MCF 10A (cell line): ENCODE measurements at regions of chr15 and their contacts with region 1.

Region 1: GRCh38 chr15:93030430-93031105 is 58.4 kb downstream of the RGMA start:
- DNase-seq: peak; percentile 81
- H3K4me3 Mint-ChIP-seq: peak overlapping the region; percentile 44
- H3K27ac Mint-ChIP-seq: peak overlapping the region; percentile 95
- H3K4me1 Mint-ChIP-seq: peaks cover 38% of the 10 kb centered on the region
- H3K27me3 Mint-ChIP-seq: no peaks in the 10 kb centered on the region
- CTCF ChIP-seq: peak; percentile 86

Region 2: GRCh38 chr15:91694831-91695210 is 1335.7 kb before region 1 on chr15:
- CTCF ChIA-PET with region 1: no interaction called
- POLR2A ChIA-PET with region 1: no interaction called
- intact Hi-C with region 1: no loop called
- DNase-seq: peak; percentile 78
- H3K4me3 Mint-ChIP-seq: peak overlapping the region; percentile 71
- H3K27ac Mint-ChIP-seq: peak overlapping the region; percentile 94
- H3K4me1 Mint-ChIP-seq: peaks cover 10% of the 10 kb centered on the region
- H3K27me3 Mint-ChIP-seq: no peaks in the 10 kb centered on the region
- CTCF ChIP-seq: no peak

Region 3: GRCh38 chr15:92803847-92804609 is 226.5 kb before region 1 on chr15:
- CTCF ChIA-PET with region 1: interaction called, 3 read pairs
- POLR2A ChIA-PET with region 1: interaction called, 4 read pairs
- intact Hi-C with region 1: loop called (anchors 2 kb)
- DNase-seq: peak; percentile 100
- H3K4me3 Mint-ChIP-seq: peak overlapping the region; percentile 1
- H3K27ac Mint-ChIP-seq: peak overlapping the region; percentile 98
- H3K4me1 Mint-ChIP-seq: peaks cover 34% of the 10 kb centered on the region
- H3K27me3 Mint-ChIP-seq: no peaks in the 10 kb centered on the region
- CTCF ChIP-seq: no peak

Region 4: GRCh38 chr15:93063262-93063671 is 32.7 kb after region 1 on chr15:
- CTCF ChIA-PET with region 1: interaction called, 32 read pairs
- POLR2A ChIA-PET with region 1: interaction called, 3 read pairs
- intact Hi-C with region 1: no loop called
- DNase-seq: peak; percentile 34
- H3K4me3 Mint-ChIP-seq: no peak overlapping the region
- H3K27ac Mint-ChIP-seq: no peak overlapping the region
- H3K4me1 Mint-ChIP-seq: peaks cover 10% of the 10 kb centered on the region
- H3K27me3 Mint-ChIP-seq: no peaks in the 10 kb centered on the region
- CTCF ChIP-seq: no peak

Region 5: DNA sequence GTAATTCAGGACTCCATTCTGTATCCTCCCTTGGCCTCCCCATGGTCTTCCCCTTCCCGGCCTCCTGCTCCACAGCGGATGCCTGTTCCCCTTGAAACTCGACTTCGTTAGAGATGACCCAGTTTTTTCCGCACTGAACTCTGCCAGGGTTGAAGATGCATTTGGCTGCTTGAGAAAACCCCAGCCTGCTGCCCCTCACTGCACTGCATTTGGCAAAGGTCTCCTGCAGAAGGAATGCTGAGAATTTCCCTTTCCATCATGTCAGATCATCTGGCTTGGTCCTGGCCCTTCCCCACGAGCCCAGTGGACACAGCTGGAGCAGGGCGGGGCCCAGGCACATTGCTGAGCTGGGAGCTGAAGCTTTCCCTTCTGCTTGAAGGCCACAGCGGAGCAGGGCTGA is 96.0 kb after region 1 on chr15:
- CTCF ChIA-PET with region 1: no interaction called
- POLR2A ChIA-PET with region 1: no interaction called
- intact Hi-C with region 1: no loop called
- DNase-seq: no peak
- H3K4me3 Mint-ChIP-seq: no peak overlapping the region
- H3K27ac Mint-ChIP-seq: no peak overlapping the region
- H3K4me1 Mint-ChIP-seq: no peaks in the 10 kb centered on the region
- H3K27me3 Mint-ChIP-seq: no peaks in the 10 kb centered on the region
- CTCF ChIP-seq: no peak

Region 6: DNA sequence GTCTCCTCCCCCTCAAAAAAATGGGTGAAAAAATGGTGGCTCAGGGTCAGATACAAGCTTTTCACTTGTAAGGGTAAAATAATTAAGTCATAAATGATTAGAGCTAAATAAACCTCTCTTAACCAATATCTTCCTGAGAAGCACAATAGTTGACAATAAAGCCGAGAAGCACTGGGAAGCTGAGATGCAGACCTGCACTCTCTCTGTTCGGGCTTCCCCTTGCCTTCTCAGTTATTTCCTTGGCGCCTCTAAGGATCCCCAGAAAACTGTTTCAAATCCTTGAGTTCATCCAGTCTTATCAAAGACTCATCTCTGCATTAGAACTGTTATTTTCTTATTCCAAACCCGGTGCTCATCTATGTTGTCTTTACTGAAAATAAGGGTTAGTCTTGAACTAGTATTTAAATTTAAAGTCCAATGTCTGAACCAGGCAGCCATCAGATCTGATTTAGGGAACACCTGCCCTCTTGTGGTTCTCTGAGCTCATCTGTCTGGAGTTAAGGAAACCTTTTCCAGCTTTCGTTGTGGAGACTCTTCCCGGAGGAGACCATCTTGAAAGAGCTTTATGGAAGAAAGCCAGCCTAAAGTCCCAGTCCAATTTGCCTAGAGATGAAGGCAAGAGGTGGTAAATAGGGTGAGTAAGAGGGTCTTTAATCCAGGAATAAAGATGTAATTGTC is 944.4 kb after region 1 on chr15:
- CTCF ChIA-PET with region 1: interaction called, 20 read pairs
- POLR2A ChIA-PET with region 1: no interaction called
- intact Hi-C with region 1: loop called (anchors 2 kb)
- DNase-seq: peak; percentile 70
- H3K4me3 Mint-ChIP-seq: no peak overlapping the region
- H3K27ac Mint-ChIP-seq: no peak overlapping the region
- H3K4me1 Mint-ChIP-seq: no peaks in the 10 kb centered on the region
- H3K27me3 Mint-ChIP-seq: no peaks in the 10 kb centered on the region
- CTCF ChIP-seq: peak; percentile 67

Region 7: DNA sequence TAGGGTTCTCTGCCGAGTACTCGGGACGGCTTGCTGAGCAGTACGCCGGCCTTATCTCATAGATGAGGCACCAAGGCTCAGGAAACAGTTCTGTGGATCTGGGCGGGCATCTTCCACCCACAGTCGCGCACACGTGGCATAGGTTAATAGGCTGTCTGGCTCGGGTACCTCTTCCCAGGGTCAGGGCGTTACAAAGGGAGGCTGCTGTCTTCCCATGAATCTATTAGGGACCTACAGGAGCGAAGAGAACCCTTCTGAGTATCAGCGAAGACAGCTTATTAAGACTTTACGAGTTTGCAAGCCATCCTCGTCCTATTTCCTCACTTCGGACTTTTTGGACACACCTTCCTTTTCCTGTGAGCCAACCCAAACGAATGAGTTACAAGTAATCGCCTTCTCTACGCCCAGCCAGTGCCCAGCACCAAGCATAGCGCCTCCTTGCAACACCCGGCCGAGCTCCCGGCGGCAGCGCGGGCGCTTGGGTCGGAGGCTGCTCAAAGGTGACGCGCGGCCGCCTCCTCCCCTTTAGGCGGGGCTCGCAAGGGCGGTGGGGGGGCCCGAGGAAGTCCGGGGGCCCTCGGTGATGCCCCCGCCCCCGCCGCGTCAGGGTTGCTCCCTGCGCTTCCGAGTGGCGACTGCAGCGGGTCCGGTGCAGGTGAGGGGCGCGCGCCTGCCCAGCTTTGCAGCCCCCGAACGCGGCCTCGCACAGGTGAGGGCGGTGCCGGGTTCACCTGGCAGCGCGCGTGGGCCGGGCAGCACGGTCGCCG is 1200.6 kb after region 1 on chr15 and contains the start of gene MCTP2:
- CTCF ChIA-PET with region 1: no interaction called
- POLR2A ChIA-PET with region 1: no interaction called
- intact Hi-C with region 1: loop called (anchors 10 kb)
- DNase-seq: peak; percentile 95
- H3K4me3 Mint-ChIP-seq: peak within 1 kb of the TSS; percentile 75
- H3K27ac Mint-ChIP-seq: peak within 1 kb of the TSS; percentile 85
- H3K4me1 Mint-ChIP-seq: peaks cover 33% of the 10 kb centered on the region
- H3K27me3 Mint-ChIP-seq: no peaks in the 10 kb centered on the region
- CTCF ChIP-seq: no peak
- total RNA-seq, gene MCTP2: 20.5 and 25.7 TPM in 2 replicates